Upper lobe of right lung (tissue), 1 donor: ENCODE measurements at regions of chr13 and their contacts with region 1.

Region 1: GRCh38 chr13:113951246-113951999 is 22.5 kb downstream of the C13orf46 start:
- DNase-seq: peak; percentile 93
- ATAC-seq: peak; percentile 96
- H3K4me3 ChIP-seq: no peak overlapping the region
- H3K27ac ChIP-seq: no peak overlapping the region
- H3K4me1 ChIP-seq: no peaks in the 10 kb centered on the region
- H3K27me3 ChIP-seq: no peaks in the 10 kb centered on the region
- CTCF ChIP-seq: peak; percentile 78

Region 2: GRCh38 chr13:114226699-114227323 is 275.4 kb after region 1 on chr13:
- intact Hi-C with region 1: loop called (anchors 5 kb)
- DNase-seq: peak; percentile 86
- ATAC-seq: peak; percentile 96
- H3K4me3 ChIP-seq: no peak overlapping the region
- H3K27ac ChIP-seq: no peak overlapping the region
- H3K4me1 ChIP-seq: peaks cover 7% of the 10 kb centered on the region
- H3K27me3 ChIP-seq: peaks cover 14% of the 10 kb centered on the region
- CTCF ChIP-seq: peak; percentile 91